ENCODE measurements at regions of chr9 and their contacts with region 1.

Region 1: GRCh38 chr9:125706661-125707471 is at the start of gene MAPKAP1:
- DNase-seq: peak; percentile 75 to 95 (median 84)
- ATAC-seq: peak; percentile 99
- H3K4me3 ChIP-seq: peak within 1 kb of the TSS; percentile 68
- H3K4me3 Mint-ChIP-seq: peak within 1 kb of the TSS; percentile 84 to 93 (median 88)
- H3K27ac ChIP-seq: peak within 1 kb of the TSS; percentile 77
- H3K27ac Mint-ChIP-seq: peak within 1 kb of the TSS; percentile 73 to 94 (median 87)
- H3K4me1 ChIP-seq: peaks cover 19 to 24% of the 10 kb centered on the region in 2 donors
- H3K4me1 Mint-ChIP-seq: peaks cover 21 to 59% (median 45%) of the 10 kb centered on the region in 7 donors
- H3K27me3 ChIP-seq: no peaks in the 10 kb centered on the region
- H3K27me3 Mint-ChIP-seq: peaks cover 0 to 6% (median 0%) of the 10 kb centered on the region in 5 donors
- total RNA-seq, gene MAPKAP1: 41.3 to 63.8 (median 55.8) TPM

Region 2: GRCh38 chr9:125650271-125650737 is 56.6 kb before region 1 on chr9:
- CTCF ChIA-PET with region 1: no interaction called
- POLR2A ChIA-PET with region 1: interaction called, 3 read pairs
- intact Hi-C with region 1: loop called in 1 of 2 experiments (anchors 2 kb)
- DNase-seq: peak in 1 of 9 donors; percentile 10
- ATAC-seq: peak; percentile 77
- H3K4me3 ChIP-seq: no peak overlapping the region
- H3K4me3 Mint-ChIP-seq: peak overlapping the region in 5 of 10 donors; percentile 1 to 31 (median 22)
- H3K27ac ChIP-seq: no peak overlapping the region
- H3K27ac Mint-ChIP-seq: peak overlapping the region in 7 of 9 donors; percentile 5 to 70 (median 24)
- H3K4me1 ChIP-seq: peaks cover 14 to 15% of the 10 kb centered on the region in 2 donors
- H3K4me1 Mint-ChIP-seq: peaks cover 47 to 81% (median 66%) of the 10 kb centered on the region in 7 donors
- H3K27me3 ChIP-seq: no peaks in the 10 kb centered on the region
- H3K27me3 Mint-ChIP-seq: no peaks in the 10 kb centered on the region

Region 3: GRCh38 chr9:125829743-125830142 is 122.9 kb after region 1 on chr9:
- CTCF ChIA-PET with region 1: interaction called, 3 read pairs
- POLR2A ChIA-PET with region 1: interaction called, 6 read pairs
- intact Hi-C with region 1: loop called in 1 of 2 experiments (anchors 1 kb)
- DNase-seq: peak; percentile 9 to 83 (median 74)
- ATAC-seq: peak; percentile 97
- H3K4me3 ChIP-seq: peak overlapping the region; percentile 82
- H3K4me3 Mint-ChIP-seq: peak overlapping the region; percentile 69 to 92 (median 90)
- H3K27ac ChIP-seq: peak overlapping the region; percentile 82
- H3K27ac Mint-ChIP-seq: peak overlapping the region; percentile 75 to 98 (median 95)
- H3K4me1 ChIP-seq: peaks cover 5 to 18% of the 10 kb centered on the region in 2 donors
- H3K4me1 Mint-ChIP-seq: peaks cover 11 to 53% (median 35%) of the 10 kb centered on the region in 7 donors
- H3K27me3 ChIP-seq: no peaks in the 10 kb centered on the region
- H3K27me3 Mint-ChIP-seq: no peaks in the 10 kb centered on the region

Region 4: GRCh38 chr9:125990751-125991220 is 283.9 kb after region 1 on chr9:
- CTCF ChIA-PET with region 1: no interaction called
- POLR2A ChIA-PET with region 1: no interaction called
- intact Hi-C with region 1: no loop called
- DNase-seq: no peak
- ATAC-seq: no peak
- H3K4me3 ChIP-seq: no peak overlapping the region
- H3K4me3 Mint-ChIP-seq: no peak overlapping the region
- H3K27ac ChIP-seq: no peak overlapping the region
- H3K27ac Mint-ChIP-seq: no peak overlapping the region
- H3K4me1 ChIP-seq: no peaks in the 10 kb centered on the region
- H3K4me1 Mint-ChIP-seq: peaks cover 0 to 2% (median 0%) of the 10 kb centered on the region in 7 donors
- H3K27me3 ChIP-seq: no peaks in the 10 kb centered on the region
- H3K27me3 Mint-ChIP-seq: no peaks in the 10 kb centered on the region

Region 5: GRCh38 chr9:126411225-126411947 is 704.5 kb after region 1 on chr9:
- CTCF ChIA-PET with region 1: no interaction called
- POLR2A ChIA-PET with region 1: no interaction called
- intact Hi-C with region 1: loop called in 1 of 2 experiments (anchors 5 kb)
- DNase-seq: peak in 7 of 9 donors; percentile 64 to 88 (median 78)
- ATAC-seq: peak; percentile 90
- H3K4me3 ChIP-seq: peak overlapping the region; percentile 57
- H3K4me3 Mint-ChIP-seq: peak overlapping the region; percentile 70 to 88 (median 83)
- H3K27ac ChIP-seq: peak overlapping the region; percentile 64
- H3K27ac Mint-ChIP-seq: peak overlapping the region; percentile 80 to 95 (median 89)
- H3K4me1 ChIP-seq: peaks cover 24 to 27% of the 10 kb centered on the region in 2 donors
- H3K4me1 Mint-ChIP-seq: peaks cover 31 to 54% (median 45%) of the 10 kb centered on the region in 7 donors
- H3K27me3 ChIP-seq: no peaks in the 10 kb centered on the region
- H3K27me3 Mint-ChIP-seq: peaks cover 0 to 2% (median 0%) of the 10 kb centered on the region in 5 donors

Measured in naive thymus-derived CD4-positive, alpha-beta T cell (primary cell).